ENCODE measurements at regions of chr12 and their contacts with region 1.

Region 1: GRCh38 chr12:121668750-121669520 is 519 bp downstream of the MORN3 start:
- DNase-seq: peak; percentile 80
- ATAC-seq: no peak
- H3K4me3 Mint-ChIP-seq: no peak overlapping the region
- H3K27ac Mint-ChIP-seq: no peak overlapping the region
- H3K4me1 Mint-ChIP-seq: peaks cover 57% of the 10 kb centered on the region
- H3K27me3 Mint-ChIP-seq: no peaks in the 10 kb centered on the region

Region 2: GRCh38 chr12:121399391-121400331 is 269.3 kb before region 1 on chr12 and contains the start of gene RNF34:
- CTCF ChIA-PET with region 1: interaction called, 5 read pairs
- POLR2A ChIA-PET with region 1: interaction called, 3 read pairs
- intact Hi-C with region 1: loop called in 1 of 2 experiments (anchors 5 kb)
- DNase-seq: peak; percentile 99
- ATAC-seq: peak; percentile 91
- H3K4me3 Mint-ChIP-seq: peak within 1 kb of the TSS; percentile 86
- H3K27ac Mint-ChIP-seq: peak within 1 kb of the TSS; percentile 93
- H3K4me1 Mint-ChIP-seq: peaks cover 33% of the 10 kb centered on the region
- H3K27me3 Mint-ChIP-seq: no peaks in the 10 kb centered on the region
- total RNA-seq, gene RNF34: 64.2 to 75.7 TPM

Region 3: DNA sequence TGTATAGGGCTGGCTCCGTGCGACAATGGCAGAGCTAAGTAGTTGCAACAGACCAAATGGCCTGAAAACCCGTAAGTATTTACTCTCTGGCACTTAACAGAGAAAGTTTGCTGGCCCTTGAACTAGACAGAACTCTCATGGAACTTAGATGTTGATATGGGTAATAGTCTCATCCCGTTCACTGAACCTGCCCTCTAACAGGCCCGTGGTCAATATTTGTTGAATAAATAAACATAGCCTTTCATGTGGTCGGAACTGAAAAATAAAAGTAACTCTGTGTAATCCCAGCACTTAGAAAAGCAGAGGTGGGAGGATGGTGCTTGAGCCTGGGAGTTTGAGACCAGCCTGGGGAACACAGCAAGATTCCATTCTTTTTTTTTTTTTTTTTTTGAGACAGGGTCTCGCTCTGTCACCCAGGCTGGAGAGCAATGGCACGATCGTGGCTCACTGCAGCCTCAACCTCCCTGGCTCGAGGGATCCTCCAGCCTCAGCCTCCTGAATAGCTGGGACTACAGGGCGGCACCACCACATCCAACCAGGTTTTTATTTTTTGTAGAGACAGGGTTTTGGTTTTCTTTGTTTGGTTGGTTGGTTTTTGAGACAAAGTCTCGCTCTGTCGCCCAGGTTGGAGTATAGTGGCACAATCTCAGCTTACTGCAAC is 117.8 kb before region 1 on chr12:
- CTCF ChIA-PET with region 1: interaction called, 37 read pairs
- POLR2A ChIA-PET with region 1: no interaction called
- intact Hi-C with region 1: loop called (anchors 1 to 5 kb)
- DNase-seq: no peak
- ATAC-seq: no peak
- H3K4me3 Mint-ChIP-seq: no peak overlapping the region
- H3K27ac Mint-ChIP-seq: no peak overlapping the region
- H3K4me1 Mint-ChIP-seq: peaks cover 6% of the 10 kb centered on the region
- H3K27me3 Mint-ChIP-seq: no peaks in the 10 kb centered on the region

Region 4: GRCh38 chr12:121590476-121591143 is 78.3 kb before region 1 on chr12:
- CTCF ChIA-PET with region 1: interaction called, 8 read pairs
- POLR2A ChIA-PET with region 1: no interaction called
- intact Hi-C with region 1: loop called in 1 of 2 experiments (anchors 1 kb)
- DNase-seq: peak; percentile 79
- ATAC-seq: peak; percentile 82
- H3K4me3 Mint-ChIP-seq: peak overlapping the region; percentile 75
- H3K27ac Mint-ChIP-seq: peak overlapping the region; percentile 98
- H3K4me1 Mint-ChIP-seq: peaks cover 32% of the 10 kb centered on the region
- H3K27me3 Mint-ChIP-seq: no peaks in the 10 kb centered on the region

Region 5: GRCh38 chr12:121637231-121637914 is 31.6 kb before region 1 on chr12:
- CTCF ChIA-PET with region 1: interaction called, 15 read pairs
- POLR2A ChIA-PET with region 1: interaction called, 4 read pairs
- intact Hi-C with region 1: no loop called
- DNase-seq: peak; percentile 77
- ATAC-seq: peak; percentile 86
- H3K4me3 Mint-ChIP-seq: peak overlapping the region; percentile 63
- H3K27ac Mint-ChIP-seq: peak overlapping the region; percentile 91
- H3K4me1 Mint-ChIP-seq: peaks cover 53% of the 10 kb centered on the region
- H3K27me3 Mint-ChIP-seq: no peaks in the 10 kb centered on the region

Region 6: DNA sequence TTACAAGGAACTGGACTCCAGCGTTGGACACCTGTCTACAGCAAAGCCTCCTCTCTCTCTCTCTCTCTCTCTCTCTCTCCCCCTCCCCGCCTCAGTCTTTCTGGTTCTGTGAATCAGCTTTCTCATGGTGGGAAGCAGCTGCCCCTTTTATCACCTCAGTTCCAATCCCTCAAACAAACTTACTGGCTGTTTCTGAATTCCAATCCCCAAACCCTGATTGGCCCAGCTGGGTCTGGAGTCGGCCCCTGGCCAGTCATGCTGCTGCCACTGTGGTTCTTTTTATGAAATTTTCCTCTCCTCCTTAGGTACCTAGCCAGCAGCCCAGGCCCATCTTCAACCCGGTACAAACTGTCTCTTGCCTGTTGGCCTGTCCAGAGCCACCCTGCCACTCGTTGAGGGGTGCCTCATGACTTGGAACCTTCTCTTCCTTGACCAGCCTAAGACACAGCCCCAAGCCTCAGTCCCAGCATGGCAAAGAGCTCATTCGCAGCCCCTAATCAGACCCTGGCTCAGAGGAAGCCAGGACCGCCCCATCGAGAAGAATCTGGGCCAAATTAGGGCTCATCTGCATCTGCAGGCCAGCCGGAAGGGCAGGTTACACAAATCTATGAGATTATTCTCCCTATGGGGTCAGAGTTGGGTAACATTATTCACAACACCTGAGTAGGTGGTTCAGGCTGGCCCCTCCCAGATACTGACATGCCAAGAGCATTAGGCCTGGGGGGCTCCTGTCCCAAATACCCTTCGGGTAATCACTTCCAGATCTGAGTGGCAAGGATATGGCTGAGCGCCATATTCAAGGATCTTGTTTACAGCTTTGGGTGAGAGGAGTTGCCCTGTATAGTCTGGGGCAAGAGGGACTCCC is 10.0 kb after region 1 on chr12:
- CTCF ChIA-PET with region 1: interaction called, 5 read pairs
- POLR2A ChIA-PET with region 1: no interaction called
- intact Hi-C with region 1: loop called in 1 of 2 experiments (anchors 1 kb)
- DNase-seq: peak; percentile 32
- ATAC-seq: peak; percentile 21
- H3K4me3 Mint-ChIP-seq: no peak overlapping the region
- H3K27ac Mint-ChIP-seq: peak overlapping the region; percentile 23
- H3K4me1 Mint-ChIP-seq: peaks cover 7% of the 10 kb centered on the region
- H3K27me3 Mint-ChIP-seq: no peaks in the 10 kb centered on the region